PC-3 (cell line): ENCODE measurements at regions of chr13 and their contacts with region 1.

Region 1: GRCh38 chr13:59587971-59588716 is 575.6 kb downstream of the DIAPH3 start:
- DNase-seq: no peak
- ATAC-seq: no peak
- H3K4me3 ChIP-seq: no peak overlapping the region
- H3K27ac ChIP-seq: no peak overlapping the region
- H3K4me1 ChIP-seq: no peaks in the 10 kb centered on the region
- H3K27me3 ChIP-seq: no peaks in the 10 kb centered on the region
- CTCF ChIP-seq: no peak

Region 2: DNA sequence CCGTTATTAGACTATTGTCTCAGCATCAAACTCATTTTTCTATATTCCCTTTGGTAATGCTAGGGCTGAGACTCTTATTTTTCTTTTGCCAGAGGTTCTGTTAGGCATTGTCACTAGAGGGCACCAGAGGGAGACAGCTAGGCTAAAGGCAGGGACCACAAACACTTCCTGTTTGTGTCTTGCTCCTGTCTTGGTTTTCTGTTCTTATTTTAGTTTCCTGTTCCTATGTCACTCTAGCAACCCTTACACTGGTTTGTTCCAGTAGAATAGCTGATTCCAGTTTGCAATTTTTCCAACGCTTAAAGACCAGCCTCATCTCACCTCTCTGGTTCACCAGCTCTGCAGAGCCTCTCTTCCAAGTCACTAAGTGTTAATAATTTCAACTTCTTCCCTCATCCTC is 196.4 kb before region 1 on chr13:
- CTCF ChIA-PET with region 1: interaction called, 14 read pairs
- POLR2A ChIA-PET with region 1: no interaction called
- intact Hi-C with region 1: no loop called
- DNase-seq: peak; percentile 62
- ATAC-seq: peak; percentile 74
- H3K4me3 ChIP-seq: no peak overlapping the region
- H3K27ac ChIP-seq: no peak overlapping the region
- H3K4me1 ChIP-seq: no peaks in the 10 kb centered on the region
- H3K27me3 ChIP-seq: no peaks in the 10 kb centered on the region
- CTCF ChIP-seq: peak; percentile 77